ENCODE measurements at regions of chr1 and their contacts with region 1.

Region 1: GRCh38 chr1:107420559-107420958 is 279.7 kb downstream of the NTNG1 start:
- DNase-seq: no peak
- ATAC-seq: no peak
- H3K4me3 ChIP-seq: no peak overlapping the region
- H3K27ac ChIP-seq: no peak overlapping the region
- H3K4me1 ChIP-seq: no peaks in the 10 kb centered on the region
- H3K27me3 ChIP-seq: no peaks in the 10 kb centered on the region
- CTCF ChIP-seq: no peak

Region 2: DNA sequence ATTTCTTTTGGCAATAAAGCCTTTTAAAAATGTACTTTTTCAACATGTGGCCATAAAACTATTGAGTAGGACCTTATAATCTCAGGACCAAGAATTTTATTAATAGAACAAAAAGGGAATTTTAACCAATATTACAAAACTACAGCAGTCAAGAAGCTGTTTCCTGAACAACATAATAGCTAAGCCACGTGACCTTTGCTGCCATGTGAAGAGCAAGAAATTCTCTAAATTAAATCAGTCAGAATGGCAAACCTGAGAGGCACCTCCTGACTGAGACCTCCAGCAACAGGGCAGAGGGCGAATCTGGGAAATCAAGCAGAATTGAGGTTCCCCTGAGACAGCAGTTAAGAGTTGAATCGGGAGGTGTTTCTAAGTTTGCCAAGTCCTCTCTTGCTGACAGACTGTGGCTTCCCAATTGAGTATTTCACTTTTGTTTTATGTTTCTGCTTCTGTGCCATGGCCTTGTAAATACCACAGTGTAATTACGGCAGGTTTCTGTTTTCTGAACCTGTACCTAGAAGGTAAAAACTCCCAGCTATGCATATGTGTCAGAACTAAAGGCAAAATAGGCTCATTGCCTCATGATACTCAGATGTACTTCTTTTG is 78.7 kb after region 1 on chr1:
- intact Hi-C with region 1: loop called in 1 of 2 experiments (anchors 10 kb)
- DNase-seq: no peak
- ATAC-seq: no peak
- H3K4me3 ChIP-seq: no peak overlapping the region
- H3K27ac ChIP-seq: no peak overlapping the region
- H3K4me1 ChIP-seq: no peaks in the 10 kb centered on the region
- H3K27me3 ChIP-seq: no peaks in the 10 kb centered on the region
- CTCF ChIP-seq: no peak

Measured in psoas muscle (tissue), 8 donors.